Head of caudate nucleus (tissue), 42 donors: ENCODE measurements at regions of chr14 and their contacts with region 1.

Region 1: DNA sequence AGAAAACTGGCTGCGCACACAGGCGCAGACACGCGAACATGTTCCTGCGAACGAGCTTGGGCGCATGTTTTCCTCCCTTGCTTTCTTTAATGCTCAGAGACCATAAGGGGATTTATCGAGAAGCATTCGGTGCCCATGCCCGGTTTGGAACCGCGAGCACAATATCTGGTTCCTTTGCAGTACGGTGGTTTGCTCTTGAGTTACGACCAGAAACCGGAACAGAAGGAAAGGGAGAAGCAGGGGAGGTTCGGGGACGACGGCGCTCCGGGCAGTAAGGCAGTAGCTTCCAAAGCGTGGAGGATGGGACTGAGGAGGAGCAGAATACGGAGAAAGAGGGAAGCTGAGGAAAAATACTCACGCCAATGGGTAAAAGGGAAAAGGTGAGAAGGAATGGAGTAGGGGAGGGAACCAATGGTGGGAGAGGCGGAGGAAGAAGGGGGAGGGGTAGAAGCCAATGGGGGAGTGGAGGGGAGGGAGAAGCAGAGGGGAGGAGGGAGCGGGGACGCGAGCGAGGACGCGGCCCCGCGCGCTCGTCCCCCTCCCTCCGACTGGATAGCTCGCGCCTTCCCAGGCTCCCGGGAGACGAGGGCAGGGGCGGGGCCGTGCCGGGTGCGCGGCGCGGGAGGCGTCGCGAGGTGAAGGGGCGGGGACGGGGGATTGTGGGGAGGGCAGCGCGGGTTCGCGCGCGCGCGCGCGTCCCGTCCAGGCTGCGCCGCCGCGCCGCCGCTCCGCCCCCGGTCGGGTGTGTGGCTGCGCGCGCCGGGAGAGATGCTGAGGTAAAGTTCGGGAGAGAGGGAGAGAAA is 625 bp upstream of the ARHGAP5 start:
- DNase-seq: peak; percentile 84 to 99 (median 97)

Region 2: GRCh38 chr14:32202998-32203882 is 126.8 kb after region 1 on chr14 and contains the start of gene RNU6-8:
- intact Hi-C with region 1: loop called (anchors 5 kb)
- DNase-seq: peak; percentile 81 to 96 (median 90)

Region 3: DNA sequence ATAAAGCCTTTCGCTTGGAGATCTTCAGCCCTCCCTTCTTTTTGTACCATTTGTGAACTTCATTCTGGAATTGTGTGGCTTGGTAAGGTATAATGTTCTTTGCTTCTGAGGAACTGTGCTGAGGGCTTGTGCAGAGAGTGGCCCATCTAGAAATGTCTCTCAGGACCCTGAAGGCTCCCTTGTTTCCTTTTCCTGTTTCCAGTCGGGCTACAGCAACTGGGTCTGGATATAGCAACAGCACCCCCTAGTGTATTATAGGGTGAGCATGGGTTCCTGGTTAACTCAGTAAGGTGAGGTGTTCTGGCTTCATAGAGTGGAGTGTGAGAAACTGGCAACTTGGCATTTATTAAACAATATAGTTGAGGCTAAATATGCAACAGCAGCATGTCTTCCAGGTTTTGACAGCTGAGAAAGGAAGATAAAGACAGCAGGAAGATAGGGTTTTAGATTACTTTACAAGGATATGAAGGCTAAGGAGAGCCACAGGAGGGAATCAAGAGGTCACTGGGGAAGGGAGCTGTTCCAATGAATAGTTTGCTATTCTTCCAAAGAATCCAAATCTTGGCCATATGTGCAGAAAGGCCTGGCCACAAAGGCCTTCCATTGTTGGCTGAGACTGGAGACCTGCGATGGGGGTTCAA is 175.7 kb after region 1 on chr14:
- intact Hi-C with region 1: loop called (anchors 5 kb)
- DNase-seq: peak in 39 of 42 donors; percentile 11 to 88 (median 65)

Region 4: GRCh38 chr14:32366256-32366879 is 289.9 kb after region 1 on chr14:
- intact Hi-C with region 1: loop called (anchors 10 kb)
- DNase-seq: peak; percentile 24 to 86 (median 68)

Region 5: DNA sequence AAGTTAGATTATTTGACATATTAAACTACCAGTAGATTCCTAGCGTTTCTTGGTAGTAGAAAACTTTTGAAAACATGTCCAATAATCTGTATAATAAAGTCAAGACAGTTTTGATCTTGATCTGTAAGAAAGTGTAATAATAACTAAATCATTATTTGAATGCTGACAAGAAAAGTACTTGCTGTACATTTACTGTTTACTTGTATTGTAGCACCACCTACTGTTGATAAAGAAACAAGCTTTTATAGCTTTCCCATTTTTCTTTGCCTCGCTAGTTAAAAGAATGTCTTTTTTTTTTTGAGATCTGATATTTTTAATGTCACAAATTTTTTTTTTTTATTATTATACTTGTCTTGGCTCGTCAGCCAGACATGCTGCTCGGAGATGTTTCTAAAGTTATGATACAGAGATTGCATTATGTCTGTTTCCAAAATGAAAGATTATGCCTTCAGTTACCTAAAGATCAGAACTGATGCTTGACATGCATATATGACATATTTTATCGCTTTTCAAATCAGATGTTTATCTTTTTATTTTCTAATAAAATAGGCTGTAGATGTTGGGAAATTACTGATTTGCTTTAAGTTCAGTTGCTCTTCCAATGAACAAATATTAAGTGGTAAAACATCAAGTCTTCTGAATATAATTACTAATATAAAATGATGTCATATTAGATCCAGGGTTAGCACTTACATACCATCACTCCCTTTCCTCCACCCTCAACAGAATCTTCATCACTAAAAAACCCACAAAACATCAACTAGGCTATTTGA is 393.1 kb after region 1 on chr14:
- intact Hi-C with region 1: loop called (anchors 5 kb)
- DNase-seq: no peak

Region 6: DNA sequence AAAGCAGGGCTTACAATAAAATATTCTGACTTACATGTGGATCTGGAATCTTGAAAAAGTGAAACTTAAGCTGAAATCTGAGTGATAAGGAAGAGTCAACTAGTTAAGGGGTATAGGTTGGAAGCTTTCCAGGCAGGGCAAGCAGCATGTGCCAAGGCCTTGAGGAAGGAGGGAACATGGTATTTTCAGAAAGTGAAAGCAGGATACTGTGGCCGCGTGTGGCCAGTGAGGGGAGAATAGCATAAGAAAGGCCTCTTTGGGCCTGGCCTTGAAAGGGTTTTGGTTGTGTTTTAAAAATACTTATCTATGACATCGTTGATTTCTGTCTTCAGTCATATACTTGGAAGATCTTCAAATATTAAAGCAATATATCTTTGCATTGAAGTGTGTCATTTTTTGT is 466.0 kb after region 1 on chr14:
- intact Hi-C with region 1: loop called (anchors 10 kb)
- DNase-seq: no peak